ENCODE measurements at regions of chr15 and their contacts with region 1.

Region 1: GRCh38 chr15:38453971-38454695 is at the start of gene FAM98B:
- DNase-seq: peak; percentile 73 to 94 (median 82)
- ATAC-seq: peak; percentile 92
- H3K4me3 ChIP-seq: peak within 1 kb of the TSS; percentile 98
- H3K4me3 Mint-ChIP-seq: peak within 1 kb of the TSS; percentile 86 to 99 (median 96)
- H3K27ac ChIP-seq: peak within 1 kb of the TSS; percentile 95
- H3K27ac Mint-ChIP-seq: peak within 1 kb of the TSS; percentile 92 to 99 (median 95)
- H3K4me1 ChIP-seq: peaks cover 13 to 22% of the 10 kb centered on the region in 2 donors
- H3K4me1 Mint-ChIP-seq: peaks cover 24 to 46% (median 36%) of the 10 kb centered on the region in 7 donors
- H3K27me3 ChIP-seq: no peaks in the 10 kb centered on the region
- H3K27me3 Mint-ChIP-seq: peaks cover 0 to 19% (median 0%) of the 10 kb centered on the region in 5 donors
- total RNA-seq, gene FAM98B: 16.2 to 39.5 (median 27.6) TPM

Region 2: GRCh38 chr15:36579792-36580431 is 1874.2 kb before region 1 on chr15:
- CTCF ChIA-PET with region 1: no interaction called
- POLR2A ChIA-PET with region 1: no interaction called
- intact Hi-C with region 1: loop called in 1 of 2 experiments (anchors 10 kb)
- DNase-seq: peak in 1 of 9 donors; percentile 27
- ATAC-seq: peak; percentile 23
- H3K4me3 ChIP-seq: peak overlapping the region; percentile 92
- H3K4me3 Mint-ChIP-seq: peak overlapping the region; percentile 85 to 94 (median 92)
- H3K27ac ChIP-seq: peak overlapping the region; percentile 85
- H3K27ac Mint-ChIP-seq: peak overlapping the region; percentile 56 to 96 (median 91)
- H3K4me1 ChIP-seq: peaks cover 6% of the 10 kb centered on the region in 2 donors
- H3K4me1 Mint-ChIP-seq: peaks cover 7 to 34% (median 26%) of the 10 kb centered on the region in 7 donors
- H3K27me3 ChIP-seq: no peaks in the 10 kb centered on the region
- H3K27me3 Mint-ChIP-seq: peaks cover 0 to 4% (median 0%) of the 10 kb centered on the region in 5 donors

Region 3: DNA sequence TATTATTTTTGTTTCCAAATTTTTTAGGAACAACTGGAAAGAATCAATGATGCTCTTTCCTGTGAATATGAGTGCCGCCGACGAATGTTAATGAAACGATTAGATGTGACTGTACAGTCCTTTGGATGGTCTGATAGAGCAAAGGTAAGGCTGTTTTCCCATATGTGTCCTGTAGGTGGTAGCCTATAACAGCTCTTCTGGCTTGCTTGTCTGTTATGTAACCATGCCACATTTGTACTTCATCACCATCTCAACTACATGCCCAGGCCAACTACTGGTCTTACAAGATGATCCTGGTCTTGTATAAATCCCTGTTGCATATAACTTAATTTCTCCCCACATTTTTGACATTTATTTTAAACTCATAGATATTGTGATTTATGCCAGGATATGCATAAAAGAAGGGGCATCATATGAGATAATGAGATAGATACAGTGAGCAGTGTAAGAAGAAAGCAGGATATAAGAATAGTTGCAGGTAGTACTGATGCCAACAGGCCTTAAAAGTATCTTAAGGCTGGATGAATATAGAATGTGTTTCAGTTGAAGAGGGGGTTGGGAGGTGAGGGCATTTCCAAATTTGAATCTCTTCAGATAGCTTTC is 20.1 kb after region 1 on chr15:
- CTCF ChIA-PET with region 1: interaction called, 5 read pairs
- POLR2A ChIA-PET with region 1: interaction called, 6 read pairs
- intact Hi-C with region 1: loop called in 1 of 2 experiments (anchors 2 kb)
- DNase-seq: peak in 7 of 9 donors; percentile 53 to 75 (median 62)
- ATAC-seq: peak; percentile 100
- H3K4me3 ChIP-seq: no peak overlapping the region
- H3K4me3 Mint-ChIP-seq: peak overlapping the region in 2 of 10 donors; percentile 4 to 10
- H3K27ac ChIP-seq: no peak overlapping the region
- H3K27ac Mint-ChIP-seq: peak overlapping the region; percentile 10 to 88 (median 81)
- H3K4me1 ChIP-seq: peaks cover 0 to 5% of the 10 kb centered on the region in 2 donors
- H3K4me1 Mint-ChIP-seq: peaks cover 10 to 23% (median 13%) of the 10 kb centered on the region in 7 donors
- H3K27me3 ChIP-seq: no peaks in the 10 kb centered on the region
- H3K27me3 Mint-ChIP-seq: no peaks in the 10 kb centered on the region